ENCODE measurements at regions of chr2 and their contacts with region 1.

Region 1: DNA sequence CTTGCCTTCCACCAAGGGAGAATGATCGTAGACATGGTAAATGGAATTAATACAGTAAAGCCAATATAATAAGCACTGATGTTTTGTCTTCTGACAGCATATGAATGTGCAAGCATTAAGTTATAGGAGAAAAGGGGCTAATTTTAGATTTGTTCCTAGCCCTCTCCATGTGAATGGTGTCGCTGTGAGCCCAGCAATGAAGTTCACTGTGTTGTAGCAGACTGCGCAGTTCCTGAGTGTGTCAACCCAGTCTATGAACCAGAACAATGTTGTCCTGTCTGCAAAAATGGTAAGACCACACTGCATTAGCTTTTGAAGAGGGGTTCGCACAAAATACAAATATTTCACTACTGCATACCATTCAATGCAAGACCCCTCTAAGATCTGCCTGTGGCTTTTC is 25.6 kb downstream of the VWC2L start:
- DNase-seq: no peak
- H3K4me3 ChIP-seq: no peak overlapping the region
- H3K27ac ChIP-seq: no peak overlapping the region
- H3K4me1 ChIP-seq: no peaks in the 10 kb centered on the region
- H3K27me3 ChIP-seq: no peaks in the 10 kb centered on the region
- CTCF ChIP-seq: no peak
- POLR2A ChIP-seq: no peak

Region 2: DNA sequence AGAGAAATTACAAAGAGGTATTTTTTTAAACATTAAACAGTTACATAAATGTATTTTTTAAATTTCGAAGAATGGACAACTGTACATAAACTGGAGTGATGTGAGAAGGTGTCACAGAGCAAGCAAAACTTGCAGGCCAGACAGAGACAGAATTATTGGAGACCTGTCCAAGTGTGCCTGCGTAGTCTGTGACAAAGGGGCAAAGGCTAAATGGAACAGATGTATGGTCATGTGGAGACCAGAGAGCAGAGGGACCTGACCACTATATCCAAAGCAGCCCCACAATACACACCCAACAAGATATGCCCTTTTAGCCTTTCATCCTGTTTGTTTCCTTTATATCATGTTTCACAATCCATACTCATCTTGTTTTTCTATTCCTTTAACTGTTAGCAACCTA is 250.9 kb before region 1 on chr2:
- intact Hi-C with region 1: loop called (anchors 10 kb)
- DNase-seq: no peak
- H3K4me3 ChIP-seq: no peak overlapping the region
- H3K27ac ChIP-seq: no peak overlapping the region
- H3K4me1 ChIP-seq: no peaks in the 10 kb centered on the region
- H3K27me3 ChIP-seq: no peaks in the 10 kb centered on the region
- CTCF ChIP-seq: no peak
- POLR2A ChIP-seq: no peak

Region 3: GRCh38 chr2:214389334-214389733 is 47.1 kb before region 1 on chr2:
- intact Hi-C with region 1: no loop called
- DNase-seq: no peak
- H3K4me3 ChIP-seq: no peak overlapping the region
- H3K27ac ChIP-seq: no peak overlapping the region
- H3K4me1 ChIP-seq: no peaks in the 10 kb centered on the region
- H3K27me3 ChIP-seq: no peaks in the 10 kb centered on the region
- CTCF ChIP-seq: no peak
- POLR2A ChIP-seq: no peak

Measured in vagina (tissue), 2 donors.